WTC11 (cell line): ENCODE measurements at regions of chr22 and their contacts with region 1.

Region 1: DNA sequence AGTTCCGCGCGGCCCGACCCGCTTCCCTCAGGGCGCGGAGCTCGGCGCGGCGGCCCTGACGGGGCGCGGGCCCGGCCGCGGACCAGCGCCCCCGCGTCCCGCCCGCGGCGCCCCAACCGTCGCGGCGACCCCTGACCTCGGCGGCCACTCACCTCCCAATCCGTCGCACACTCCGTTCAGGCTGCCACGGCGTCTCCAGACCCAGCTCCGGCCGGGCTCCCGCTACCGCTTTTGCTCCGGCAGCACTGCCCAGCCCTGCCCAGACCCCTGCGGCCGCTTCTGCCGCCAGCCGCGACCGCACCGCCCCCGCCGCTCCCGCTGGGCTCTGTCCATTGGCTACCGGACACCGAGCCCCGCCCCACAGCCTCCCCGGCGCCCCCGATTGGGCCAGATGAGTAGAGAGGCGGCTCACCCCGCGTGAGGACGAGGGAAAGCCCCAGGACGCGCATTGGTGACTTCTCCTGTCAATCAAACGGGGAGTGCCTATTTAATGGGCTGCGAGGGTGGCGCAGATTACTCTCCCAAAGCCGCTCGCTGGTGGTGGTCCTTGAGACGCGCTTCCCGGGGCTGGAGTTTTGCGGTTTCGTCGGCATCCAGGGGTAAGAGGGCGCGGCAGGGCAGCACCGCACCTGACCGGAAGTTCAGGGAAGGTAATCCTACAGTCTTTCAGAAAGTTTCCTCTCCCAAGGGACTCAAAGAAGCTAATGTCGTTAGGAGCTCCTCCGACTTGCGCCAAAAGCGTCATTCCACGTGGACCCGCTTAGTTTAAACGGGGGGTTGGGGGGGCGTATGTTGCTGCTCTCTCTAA is at the start of gene PACSIN2:
- DNase-seq: peak; percentile 100
- ATAC-seq: peak; percentile 95
- H3K4me3 Mint-ChIP-seq: peak within 1 kb of the TSS; percentile 95
- H3K27ac Mint-ChIP-seq: peak within 1 kb of the TSS; percentile 91
- H3K4me1 Mint-ChIP-seq: peaks cover 30% of the 10 kb centered on the region
- H3K27me3 Mint-ChIP-seq: peaks cover 14% of the 10 kb centered on the region
- CTCF ChIP-seq: no peak
- total RNA-seq, gene PACSIN2: 64.1 to 70.5 TPM (median 69.0 TPM) in 3 replicates

Region 2: GRCh38 chr22:42581762-42582716 is 433.0 kb before region 1 on chr22:
- CTCF ChIA-PET with region 1: no interaction called
- POLR2A ChIA-PET with region 1: interaction called, 10 read pairs
- DNase-seq: peak; percentile 75
- ATAC-seq: peak; percentile 66
- H3K4me3 Mint-ChIP-seq: peak overlapping the region; percentile 95
- H3K27ac Mint-ChIP-seq: peak overlapping the region; percentile 94
- H3K4me1 Mint-ChIP-seq: peaks cover 6% of the 10 kb centered on the region
- H3K27me3 Mint-ChIP-seq: no peaks in the 10 kb centered on the region
- CTCF ChIP-seq: no peak

Region 3: DNA sequence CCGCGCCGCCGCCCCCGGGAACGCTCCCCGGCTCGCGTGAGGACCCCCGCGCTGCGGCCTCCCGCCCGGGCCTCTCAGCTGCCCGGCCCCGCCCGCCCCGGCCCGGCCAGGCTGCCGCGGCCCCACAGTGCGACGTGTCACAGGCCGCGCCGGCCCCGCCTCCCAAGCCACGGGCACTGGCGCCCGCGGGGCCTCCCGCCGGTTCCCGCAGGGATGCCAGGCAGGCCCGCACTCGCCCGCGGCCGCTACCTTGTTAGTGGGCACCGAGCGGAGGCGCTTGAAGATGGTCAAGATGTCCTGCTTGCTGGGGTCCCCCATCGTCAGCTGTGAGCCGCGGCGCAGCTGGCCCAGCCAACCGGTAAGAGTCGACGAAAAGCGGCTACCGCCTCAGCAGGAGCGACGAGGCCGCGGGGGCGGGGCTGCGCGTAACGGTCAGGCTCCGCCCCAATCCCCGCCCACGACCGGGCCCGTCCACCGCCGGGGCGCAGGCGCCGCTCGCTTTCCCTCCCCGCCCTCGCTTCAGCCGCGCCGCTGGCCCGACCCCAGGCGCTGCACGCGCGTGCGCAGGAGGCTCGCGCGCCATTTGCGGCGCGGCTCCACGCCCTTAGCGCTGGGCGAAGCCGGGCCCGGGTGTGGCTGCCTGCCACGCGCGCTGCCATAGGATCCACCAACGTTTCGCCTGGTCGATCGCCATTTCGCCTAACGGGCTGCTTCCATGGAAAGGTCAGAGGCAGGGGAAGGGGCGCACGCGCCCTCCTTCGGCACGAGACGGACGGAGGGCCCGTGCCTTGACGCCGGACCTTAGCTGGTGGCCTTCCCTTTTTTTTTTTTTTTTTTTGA is 158.0 kb before region 1 on chr22 and contains the start of gene ARFGAP3:
- CTCF ChIA-PET with region 1: no interaction called
- POLR2A ChIA-PET with region 1: interaction called, 12 read pairs
- DNase-seq: peak; percentile 94
- ATAC-seq: peak; percentile 97
- H3K4me3 Mint-ChIP-seq: peak within 1 kb of the TSS; percentile 84
- H3K27ac Mint-ChIP-seq: no peak within 1 kb of the TSS
- H3K4me1 Mint-ChIP-seq: peaks cover 4% of the 10 kb centered on the region; the same call in 1 of the 2 replicates
- H3K27me3 Mint-ChIP-seq: peaks cover 44% of the 10 kb centered on the region
- CTCF ChIP-seq: no peak
- total RNA-seq, gene ARFGAP3: 16.9 to 17.1 TPM (median 17.1 TPM) in 3 replicates

Region 4: DNA sequence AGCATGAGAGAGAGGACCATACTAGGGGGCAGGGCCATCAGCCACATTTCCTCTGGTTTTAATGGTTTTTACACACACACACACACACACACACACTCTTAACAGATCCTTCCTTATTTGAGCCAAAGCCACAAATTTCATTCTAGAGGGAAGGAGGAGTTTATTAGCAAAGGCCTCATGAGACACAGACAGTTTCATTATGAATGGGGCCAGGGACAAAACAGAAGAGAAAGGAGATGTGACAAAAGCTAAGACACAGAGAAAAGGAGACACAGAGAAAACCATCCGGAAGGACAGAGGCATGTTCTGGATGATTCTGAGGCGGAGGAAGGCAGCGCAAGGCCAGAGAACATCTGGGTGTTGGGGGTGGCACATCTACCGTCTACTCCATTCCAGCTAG is 125.8 kb before region 1 on chr22:
- CTCF ChIA-PET with region 1: no interaction called
- POLR2A ChIA-PET with region 1: no interaction called
- DNase-seq: no peak
- ATAC-seq: no peak
- H3K4me3 Mint-ChIP-seq: no peak overlapping the region
- H3K27ac Mint-ChIP-seq: no peak overlapping the region; the same call in 1 of the 2 replicates
- H3K4me1 Mint-ChIP-seq: no peaks in the 10 kb centered on the region
- H3K27me3 Mint-ChIP-seq: no peaks in the 10 kb centered on the region
- CTCF ChIP-seq: no peak

Region 5: DNA sequence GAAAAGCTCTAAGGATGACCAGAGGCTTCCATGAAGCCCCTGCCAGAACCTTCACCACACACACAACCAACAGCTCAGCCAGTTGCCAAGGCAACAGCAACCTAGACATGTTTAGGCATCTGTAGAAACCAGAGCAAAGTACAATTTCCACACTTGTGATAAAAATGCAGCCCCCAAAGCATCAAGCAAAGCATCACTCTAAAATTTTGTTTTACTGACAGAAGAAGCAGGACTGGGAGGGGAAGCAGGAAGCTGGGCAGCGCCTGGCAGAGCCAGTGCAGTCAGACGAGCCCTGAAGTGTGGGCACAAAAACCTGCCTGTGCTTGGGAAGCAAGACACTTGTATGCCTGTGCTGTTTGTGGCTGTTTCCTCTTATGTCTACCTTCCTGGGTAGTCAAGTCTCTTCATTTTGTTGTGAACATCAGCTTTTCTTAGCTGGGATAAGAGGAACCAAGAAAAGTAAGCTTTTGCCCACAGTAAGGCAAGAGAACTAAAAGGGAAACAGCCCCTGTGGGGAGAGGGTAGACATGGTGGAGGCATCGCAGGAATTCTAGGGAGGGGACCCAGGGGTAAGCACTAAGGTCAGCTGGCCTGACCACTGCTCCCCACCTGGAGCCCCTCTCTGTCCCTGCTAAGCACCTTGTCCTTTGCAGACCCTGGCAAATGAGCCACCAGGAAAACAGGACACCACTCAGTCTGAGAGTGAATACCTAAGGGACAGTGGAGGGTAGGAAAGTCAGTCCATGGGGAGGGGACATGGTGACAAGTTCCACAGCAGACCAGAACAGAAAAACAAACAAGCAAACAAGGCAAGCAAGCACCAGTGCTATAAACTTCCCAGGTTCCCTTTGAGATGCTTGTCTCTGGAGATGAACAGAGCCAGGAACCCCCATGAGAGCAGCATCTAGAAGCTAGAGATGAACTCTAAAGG is 13.5 kb before region 1 on chr22:
- CTCF ChIA-PET with region 1: interaction called, 7 read pairs
- POLR2A ChIA-PET with region 1: interaction called, 12 read pairs
- DNase-seq: no peak
- ATAC-seq: peak; percentile 21
- H3K4me3 Mint-ChIP-seq: no peak overlapping the region
- H3K27ac Mint-ChIP-seq: peak overlapping the region; percentile 82
- H3K4me1 Mint-ChIP-seq: peaks cover 84% of the 10 kb centered on the region
- H3K27me3 Mint-ChIP-seq: no peaks in the 10 kb centered on the region
- CTCF ChIP-seq: no peak

Region 6: GRCh38 chr22:43230971-43231723 is 216.1 kb after region 1 on chr22:
- CTCF ChIA-PET with region 1: no interaction called
- POLR2A ChIA-PET with region 1: no interaction called
- DNase-seq: peak; percentile 89
- ATAC-seq: peak; percentile 54
- H3K4me3 Mint-ChIP-seq: peak overlapping the region; percentile 45
- H3K27ac Mint-ChIP-seq: peak overlapping the region; percentile 79
- H3K4me1 Mint-ChIP-seq: peaks cover 19% of the 10 kb centered on the region
- H3K27me3 Mint-ChIP-seq: no peaks in the 10 kb centered on the region; the same call in 1 of the 2 replicates
- CTCF ChIP-seq: peak; percentile 97